ENCODE measurements at regions of chr16 and their contacts with region 1.

Region 1: DNA sequence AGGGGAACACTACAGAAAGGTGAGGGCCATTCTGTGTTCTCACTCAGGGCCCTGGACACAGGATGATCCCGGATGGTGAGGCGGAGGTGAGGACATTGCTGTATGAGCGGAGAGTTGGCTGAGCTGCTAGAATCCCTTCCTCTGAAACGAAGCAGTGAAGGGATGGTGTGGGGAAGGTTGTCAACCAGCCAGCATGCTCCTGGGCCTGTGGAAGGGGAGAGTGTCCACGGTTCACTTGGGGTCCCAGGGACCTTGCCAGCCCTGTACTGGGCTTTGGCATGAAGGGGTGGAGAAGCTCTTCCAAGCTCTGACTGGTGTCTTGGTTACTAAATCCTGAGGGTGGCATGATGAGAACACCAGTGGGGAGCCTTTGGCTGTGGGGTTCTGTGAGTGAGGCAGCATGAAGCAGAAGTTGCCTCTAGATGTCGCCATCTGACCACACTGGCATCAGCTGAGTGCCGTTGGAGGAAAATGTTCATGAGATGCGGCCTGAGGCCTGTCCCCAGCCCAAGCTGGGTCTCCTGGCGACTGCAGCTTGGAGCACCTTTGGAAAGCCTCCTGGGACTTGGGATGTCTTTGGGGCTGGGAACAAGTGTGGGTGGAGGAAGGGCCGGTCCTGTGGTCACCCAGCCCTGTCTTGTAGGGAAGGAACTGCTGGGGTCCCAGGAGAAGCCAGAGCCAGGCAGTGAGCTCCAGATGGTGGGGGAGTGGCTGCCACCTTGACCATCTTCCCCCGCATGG is 14.8 kb downstream of the PDP2 start:
- DNase-seq: peak; percentile 58 to 78
- ATAC-seq: peak; percentile 89 to 96
- H3K4me3 ChIP-seq: no peak overlapping the region
- H3K27ac ChIP-seq: peak overlapping the region in 1 of 2 experiments; percentile 17; a peak in 3 of 6 replicates
- H3K4me1 ChIP-seq: peaks cover 14% of the 10 kb centered on the region
- CTCF ChIP-seq: peak; percentile 87
- EP300 ChIP-seq: no peak
- POLR2A ChIP-seq: no peak
- RAD21 ChIP-seq: peak; percentile 92 to 98

Region 2: DNA sequence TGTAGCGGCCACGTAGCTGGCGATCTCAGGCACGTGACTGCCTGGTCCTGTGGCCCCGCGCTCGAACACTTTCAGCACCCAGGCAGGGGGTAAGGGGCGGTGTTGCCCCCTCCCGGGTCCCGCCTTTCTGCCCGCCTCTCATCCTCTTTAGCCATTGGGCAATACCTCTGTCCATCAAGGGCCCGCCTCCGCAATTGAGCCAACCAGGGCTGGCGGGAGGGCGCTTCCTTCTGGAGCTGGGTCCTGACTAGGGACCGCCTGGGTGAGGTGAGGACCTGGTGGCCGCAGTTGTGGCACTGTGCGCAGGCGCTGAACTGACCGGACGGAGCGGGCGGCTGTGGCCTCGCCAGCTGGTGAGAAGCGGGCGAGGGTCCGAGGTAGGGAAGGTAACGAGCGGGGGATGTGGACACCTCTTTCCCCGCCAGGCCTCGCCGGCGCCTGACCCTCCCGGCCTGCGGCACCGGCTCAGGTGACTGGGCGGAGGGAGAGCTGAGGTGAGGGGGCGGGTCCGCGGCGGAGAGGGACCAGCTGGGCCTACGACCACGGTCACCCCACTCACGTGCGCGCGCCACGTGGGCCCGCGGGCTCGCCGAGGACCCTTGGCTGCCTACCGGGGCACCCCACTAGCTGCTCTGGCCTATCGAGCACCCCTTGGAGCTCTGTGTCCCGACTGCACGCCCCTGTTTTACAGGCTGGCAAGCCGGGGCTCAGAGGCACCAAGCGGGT is 14.7 kb before region 1 on chr16 and contains the start of gene PDP2:
- CTCF ChIA-PET with region 1: interaction called, 837 read pairs
- POLR2A ChIA-PET with region 1: interaction called, 4 read pairs
- DNase-seq: peak; percentile 89 to 96
- ATAC-seq: peak; percentile 98 to 100
- H3K4me3 ChIP-seq: peak within 1 kb of the TSS; percentile 74
- H3K27ac ChIP-seq: peak within 1 kb of the TSS; percentile 76 to 88
- H3K4me1 ChIP-seq: peaks cover 6% of the 10 kb centered on the region; the same call in 1 of the 3 replicates
- CTCF ChIP-seq: no peak
- EP300 ChIP-seq: no peak
- POLR2A ChIP-seq: peak; percentile 70
- RAD21 ChIP-seq: no peak
- polyA plus RNA-seq, gene PDP2: 10.0 and 10.7 TPM in 2 replicates

Region 3: DNA sequence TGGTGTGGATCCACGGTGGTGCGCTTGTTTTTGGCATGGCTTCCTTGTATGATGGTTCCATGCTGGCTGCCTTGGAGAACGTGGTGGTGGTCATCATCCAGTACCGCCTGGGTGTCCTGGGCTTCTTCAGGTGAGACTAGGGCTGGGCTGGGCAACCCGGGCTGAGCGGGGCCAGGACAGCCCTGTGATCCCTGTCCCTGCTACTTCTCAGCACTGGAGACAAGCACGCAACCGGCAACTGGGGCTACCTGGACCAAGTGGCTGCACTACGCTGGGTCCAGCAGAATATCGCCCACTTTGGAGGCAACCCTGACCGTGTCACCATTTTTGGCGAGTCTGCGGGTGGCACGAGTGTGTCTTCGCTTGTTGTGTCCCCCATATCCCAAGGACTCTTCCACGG is 45.1 kb after region 1 on chr16:
- CTCF ChIA-PET with region 1: interaction called, 31 read pairs
- POLR2A ChIA-PET with region 1: no interaction called
- DNase-seq: no peak
- ATAC-seq: no peak
- H3K4me3 ChIP-seq: no peak overlapping the region
- H3K27ac ChIP-seq: no peak overlapping the region
- H3K4me1 ChIP-seq: peaks cover 12% of the 10 kb centered on the region; the same call in 2 of the 3 replicates
- CTCF ChIP-seq: no peak
- EP300 ChIP-seq: no peak
- POLR2A ChIP-seq: no peak
- RAD21 ChIP-seq: no peak

Region 4: DNA sequence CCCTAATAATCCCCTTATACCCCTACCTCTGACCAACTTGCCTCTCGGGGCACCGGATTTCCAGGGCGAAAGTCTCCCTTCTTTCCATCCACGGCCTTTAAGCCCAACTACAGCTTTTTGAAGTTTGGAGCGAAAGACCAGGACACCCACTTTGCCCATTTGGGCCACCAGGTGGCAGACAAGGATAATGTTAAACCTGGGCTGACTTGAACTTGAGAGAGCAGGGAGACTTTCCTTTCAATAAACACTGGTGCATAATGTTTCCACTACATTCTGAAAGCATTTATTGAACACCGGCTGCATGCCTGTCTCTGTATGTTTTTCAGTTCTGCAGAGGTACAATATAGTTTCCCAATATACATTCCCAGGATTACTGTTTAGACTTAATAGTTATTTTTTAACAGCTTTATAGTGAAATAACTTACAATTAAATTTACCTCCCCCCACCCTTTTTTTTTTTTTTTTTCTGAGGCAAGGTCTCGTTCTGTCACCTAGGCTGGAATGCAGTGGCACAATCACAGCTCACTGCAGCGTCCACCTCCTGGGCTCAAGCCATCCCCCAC is 59.1 kb after region 1 on chr16:
- CTCF ChIA-PET with region 1: interaction called, 45 read pairs
- POLR2A ChIA-PET with region 1: no interaction called
- DNase-seq: peak; percentile 81 to 90
- ATAC-seq: peak; percentile 93 to 96
- H3K4me3 ChIP-seq: no peak overlapping the region
- H3K27ac ChIP-seq: peak overlapping the region; percentile 26 to 38; a peak in 3 of 6 replicates
- H3K4me1 ChIP-seq: peaks cover 8% of the 10 kb centered on the region; the same call in 2 of the 3 replicates
- CTCF ChIP-seq: peak; percentile 89
- EP300 ChIP-seq: no peak
- POLR2A ChIP-seq: no peak
- RAD21 ChIP-seq: peak; percentile 89 to 90

Region 5: GRCh38 chr16:66970775-66971725 is 75.9 kb after region 1 on chr16:
- CTCF ChIA-PET with region 1: interaction called, 13 read pairs
- POLR2A ChIA-PET with region 1: no interaction called
- DNase-seq: peak in 1 of 2 experiments; percentile 39
- ATAC-seq: peak; percentile 38 to 52; a peak in 5 of 6 replicates
- H3K4me3 ChIP-seq: no peak overlapping the region
- H3K27ac ChIP-seq: peak overlapping the region; percentile 25 to 35; a peak in 3 of 6 replicates
- H3K4me1 ChIP-seq: peaks cover 13% of the 10 kb centered on the region
- CTCF ChIP-seq: no peak
- EP300 ChIP-seq: no peak; a peak in 1 of 5 replicates
- POLR2A ChIP-seq: no peak
- RAD21 ChIP-seq: no peak

Region 6: GRCh38 chr16:68575082-68575481 is 1680.0 kb after region 1 on chr16:
- CTCF ChIA-PET with region 1: no interaction called
- POLR2A ChIA-PET with region 1: no interaction called
- DNase-seq: no peak
- ATAC-seq: no peak
- H3K4me3 ChIP-seq: no peak overlapping the region
- H3K27ac ChIP-seq: no peak overlapping the region
- H3K4me1 ChIP-seq: no peaks in the 10 kb centered on the region
- CTCF ChIP-seq: no peak
- EP300 ChIP-seq: no peak
- POLR2A ChIP-seq: no peak
- RAD21 ChIP-seq: no peak